ENCODE measurements at regions of chr1 and their contacts with region 1.

Region 1: DNA sequence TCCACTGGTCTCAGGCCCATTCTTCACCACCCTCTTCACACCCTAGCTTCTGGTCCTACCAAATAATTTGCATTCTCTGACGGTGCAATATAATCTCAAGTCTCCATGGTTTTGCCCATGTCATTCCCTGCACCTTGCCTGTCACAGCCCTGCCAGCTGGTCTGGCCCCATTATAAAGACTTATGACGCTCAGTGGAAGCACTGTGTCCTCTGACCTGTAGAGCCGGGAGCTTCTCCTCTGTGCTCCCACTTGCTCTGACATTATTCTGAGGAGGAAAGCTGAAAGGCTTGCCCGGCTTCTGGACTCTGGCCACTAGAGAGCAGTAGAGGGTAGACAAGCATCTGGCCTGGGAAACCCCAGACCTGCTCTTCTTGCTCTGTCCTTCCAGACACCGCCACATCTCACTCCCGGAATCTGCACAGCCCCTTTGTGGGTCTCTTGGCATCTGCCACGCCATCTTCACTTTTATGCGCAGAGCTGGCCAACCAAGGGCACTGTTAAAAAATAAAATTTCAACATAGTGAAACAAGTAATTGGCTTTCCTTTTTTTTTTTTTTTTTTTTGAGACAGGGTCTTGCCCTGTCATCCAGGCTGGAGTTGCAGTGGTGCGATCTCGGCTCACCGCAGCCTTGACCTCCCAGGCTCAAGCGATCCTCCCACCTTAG is 44.4 kb downstream of the NENF start:
- DNase-seq: peak; percentile 71
- H3K4me3 Mint-ChIP-seq: no peak overlapping the region
- H3K27ac Mint-ChIP-seq: no peak overlapping the region
- H3K4me1 Mint-ChIP-seq: peaks cover 15% of the 10 kb centered on the region
- H3K27me3 Mint-ChIP-seq: peaks cover 9% of the 10 kb centered on the region

Region 2: DNA sequence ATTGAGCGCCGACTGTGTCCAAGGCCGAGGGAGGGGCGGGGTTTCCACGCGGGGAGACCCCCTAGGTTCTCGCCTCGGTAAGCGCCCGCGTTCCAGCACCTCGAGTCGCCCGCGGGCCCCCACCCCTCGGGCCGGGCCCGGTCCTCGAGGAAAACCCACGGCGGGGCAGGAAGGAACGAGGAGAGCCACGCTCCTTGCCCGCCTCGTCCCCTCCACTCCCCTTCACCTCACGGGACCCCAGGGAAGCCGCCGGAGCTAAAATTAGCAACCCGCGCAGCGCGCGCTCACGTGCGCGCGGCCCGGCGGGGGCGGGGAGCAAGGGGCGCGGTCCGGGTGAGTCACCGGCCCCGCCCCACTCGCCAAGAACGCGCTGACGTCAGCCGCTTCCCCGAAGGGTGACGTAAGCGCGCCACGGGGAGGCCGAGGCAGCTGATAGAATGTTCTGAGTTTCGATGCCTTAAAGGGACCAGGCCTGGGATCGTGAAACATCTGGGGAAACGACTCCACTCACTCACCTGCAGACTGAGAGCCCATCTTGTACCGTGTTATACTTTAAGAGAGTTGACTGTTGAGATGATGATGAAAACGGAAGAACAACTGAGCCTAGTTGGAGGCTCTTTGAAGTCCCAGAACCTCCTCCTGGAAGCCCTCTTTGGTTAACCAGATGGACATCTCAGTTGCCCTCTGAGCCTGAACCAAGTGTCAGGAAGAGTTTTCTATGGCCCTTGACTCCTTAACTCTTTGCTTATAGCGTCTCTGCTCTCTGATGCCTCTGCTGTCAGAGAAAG is 81.7 kb after region 1 on chr1:
- intact Hi-C with region 1: loop called (anchors 5 kb)
- DNase-seq: peak; percentile 88
- H3K4me3 Mint-ChIP-seq: peak overlapping the region; percentile 61
- H3K27ac Mint-ChIP-seq: peak overlapping the region; percentile 93
- H3K4me1 Mint-ChIP-seq: peaks cover 10% of the 10 kb centered on the region
- H3K27me3 Mint-ChIP-seq: peaks cover 38% of the 10 kb centered on the region

Region 3: DNA sequence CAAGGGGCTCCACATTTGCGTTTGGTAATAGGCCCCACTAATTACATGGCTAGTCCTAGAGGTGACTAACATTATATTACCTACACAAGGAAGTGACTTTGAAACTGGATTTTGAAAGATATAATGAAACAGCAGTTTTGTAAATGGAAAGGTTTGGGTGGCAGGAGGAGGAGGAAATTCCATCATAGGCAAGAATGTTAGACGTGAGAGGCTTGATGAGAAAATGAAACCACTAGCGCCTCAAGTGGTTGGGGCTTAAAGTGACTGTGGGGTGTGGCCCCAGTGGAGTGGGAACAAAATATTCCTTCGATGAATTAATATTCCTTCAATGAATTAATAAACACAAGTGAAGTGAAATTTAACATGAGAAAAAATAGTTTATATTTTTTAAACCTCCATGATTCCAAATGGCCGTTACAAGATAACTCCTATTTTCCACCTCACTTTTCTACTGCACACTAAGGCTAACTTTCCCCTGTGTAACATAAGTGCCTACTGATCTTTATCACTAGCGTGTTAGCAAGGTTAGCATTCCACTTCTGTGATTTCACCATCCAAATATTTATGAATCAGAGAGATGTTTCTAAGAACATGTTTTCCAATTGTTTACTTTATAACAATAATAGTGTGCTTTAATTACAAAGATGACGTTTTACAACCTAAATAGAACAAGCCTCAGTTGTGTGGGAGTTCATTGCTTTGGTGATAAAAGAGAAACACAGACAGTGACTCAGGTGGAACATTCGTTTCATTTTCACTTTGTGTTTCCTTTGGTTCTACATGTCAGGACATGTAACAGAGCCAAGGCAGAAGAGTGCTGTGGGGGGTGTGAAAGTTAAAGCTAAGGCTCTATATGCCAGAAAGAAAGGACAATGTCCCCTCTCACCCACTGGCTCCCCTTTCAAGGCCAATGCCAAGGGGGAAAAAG is 118.9 kb after region 1 on chr1:
- intact Hi-C with region 1: loop called (anchors 1 kb)
- DNase-seq: peak; percentile 64
- H3K4me3 Mint-ChIP-seq: peak overlapping the region; percentile 68
- H3K27ac Mint-ChIP-seq: peak overlapping the region; percentile 96
- H3K4me1 Mint-ChIP-seq: peaks cover 27% of the 10 kb centered on the region
- H3K27me3 Mint-ChIP-seq: peaks cover 10% of the 10 kb centered on the region

Region 4: GRCh38 chr1:212630158-212630900 is 153.2 kb after region 1 on chr1:
- intact Hi-C with region 1: loop called (anchors 1 kb)
- DNase-seq: peak; percentile 48
- H3K4me3 Mint-ChIP-seq: no peak overlapping the region
- H3K27ac Mint-ChIP-seq: no peak overlapping the region
- H3K4me1 Mint-ChIP-seq: peaks cover 11% of the 10 kb centered on the region
- H3K27me3 Mint-ChIP-seq: peaks cover 6% of the 10 kb centered on the region

Region 5: DNA sequence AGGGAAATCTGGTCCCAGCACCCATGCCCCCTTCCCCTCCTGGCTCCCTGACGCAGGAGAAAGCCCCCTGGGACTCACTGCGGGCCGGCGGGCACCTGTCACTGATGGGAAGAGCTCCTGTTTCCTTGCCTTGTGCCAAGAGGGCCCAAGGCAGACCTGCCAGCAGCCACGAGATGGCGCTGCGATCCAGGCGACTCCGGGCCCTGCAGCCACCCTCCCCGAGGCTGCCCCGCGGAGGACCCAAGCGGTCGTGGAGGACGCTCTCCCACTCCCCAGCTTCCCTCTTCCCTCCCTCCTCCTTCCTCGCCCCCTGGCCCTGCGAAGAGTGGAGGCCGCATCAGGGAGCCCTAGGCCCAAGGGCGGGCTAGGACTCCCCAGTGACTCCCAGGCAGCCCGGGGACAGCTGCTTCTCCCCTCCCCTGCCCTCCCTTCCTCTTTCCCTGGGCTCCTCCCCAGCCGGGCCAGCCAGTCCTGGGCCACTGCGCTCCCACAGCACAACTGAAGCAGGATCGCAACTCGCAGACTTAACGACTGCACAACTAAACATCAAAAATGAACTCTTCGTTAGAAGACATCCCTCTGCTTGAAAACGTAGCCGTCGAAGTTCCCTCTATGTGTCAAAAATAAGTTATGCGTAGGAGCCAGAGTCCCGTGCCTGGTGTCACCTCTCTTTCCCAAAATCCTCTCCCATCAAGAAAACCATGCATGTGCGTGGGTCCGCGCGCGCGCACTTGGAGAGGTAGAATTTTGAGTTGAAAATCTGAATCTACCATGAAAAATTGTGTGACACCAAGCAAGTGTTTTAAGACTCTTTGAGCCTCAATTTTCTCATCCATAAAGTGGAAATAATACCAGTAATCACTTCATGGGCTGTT is 188.3 kb after region 1 on chr1:
- intact Hi-C with region 1: loop called (anchors 1 kb)
- DNase-seq: peak; percentile 74
- H3K4me3 Mint-ChIP-seq: peak overlapping the region; percentile 82
- H3K27ac Mint-ChIP-seq: peak overlapping the region; percentile 70
- H3K4me1 Mint-ChIP-seq: peaks cover 24% of the 10 kb centered on the region
- H3K27me3 Mint-ChIP-seq: peaks cover 13% of the 10 kb centered on the region

Region 6: DNA sequence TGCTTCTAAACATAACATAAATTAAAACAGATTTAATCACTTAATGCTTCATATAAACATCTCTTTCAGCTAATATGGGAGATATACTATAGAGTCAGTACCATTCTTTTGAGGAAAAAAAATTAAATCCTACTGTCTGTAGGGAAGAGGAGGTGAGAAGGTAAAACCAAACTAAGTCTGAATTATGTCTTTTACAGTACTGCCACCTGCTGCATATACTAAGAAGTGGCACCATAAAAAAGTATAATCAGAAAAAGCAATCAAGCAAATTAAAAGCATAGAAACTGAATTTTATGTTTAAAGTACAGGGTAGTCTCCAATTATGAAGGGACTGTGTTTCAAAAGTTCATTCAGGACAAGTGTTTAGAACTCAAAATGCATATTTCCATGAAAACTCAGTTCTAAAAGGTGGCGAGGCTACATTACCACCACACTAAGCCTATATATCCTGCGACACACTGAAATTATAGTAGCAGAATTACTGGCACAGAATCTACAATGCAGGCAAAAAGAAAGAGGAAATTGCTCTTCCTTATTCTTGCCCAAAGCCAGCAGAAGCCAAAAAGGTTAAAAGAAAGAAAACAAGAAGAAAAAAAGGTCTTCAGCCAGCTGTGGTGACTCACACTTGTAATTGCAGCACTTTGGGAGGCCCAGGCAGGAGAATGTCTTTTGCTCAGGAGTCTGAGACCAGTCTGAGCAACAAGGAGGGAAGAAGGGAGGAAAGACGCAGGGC is 305.4 kb after region 1 on chr1:
- intact Hi-C with region 1: loop called (anchors 1 kb)
- DNase-seq: no peak
- H3K4me3 Mint-ChIP-seq: no peak overlapping the region
- H3K27ac Mint-ChIP-seq: no peak overlapping the region
- H3K4me1 Mint-ChIP-seq: peaks cover 4% of the 10 kb centered on the region
- H3K27me3 Mint-ChIP-seq: no peaks in the 10 kb centered on the region

Region 7: GRCh38 chr1:212990276-212990675 is 513.1 kb after region 1 on chr1:
- intact Hi-C with region 1: loop called (anchors 1 kb)
- DNase-seq: no peak
- H3K4me3 Mint-ChIP-seq: no peak overlapping the region
- H3K27ac Mint-ChIP-seq: no peak overlapping the region
- H3K4me1 Mint-ChIP-seq: peaks cover under 1% of the 10 kb centered on the region
- H3K27me3 Mint-ChIP-seq: no peaks in the 10 kb centered on the region

Measured in activated T-helper 1 cell treated with anti-CD3 and anti-CD28 coated beads, Interleukin-12 subunit alpha, Interleukin-12 subunit beta, Interleukin-2, Interleukin-4 antibody, amounts not matched to agents 30 ng/mL and 10 ng/mL and 1 ng/mL, durations not matched to agents 14 hours and 24 hours and 36 hours (primary cell).